ENCODE measurements at regions of chr4 and their contacts with region 1.

Region 1: GRCh38 chr4:186144142-186144955 is 39.8 kb downstream of the FAM149A start:
- DNase-seq: peak; percentile 42 to 92
- H3K4me3 ChIP-seq: peak overlapping the region; percentile 58 to 67 (median 58)
- H3K27ac ChIP-seq: peak overlapping the region; percentile 61 to 90 (median 83)
- H3K4me1 ChIP-seq: peaks cover 17 to 31% (median 24%) of the 10 kb centered on the region in 4 donors
- H3K27me3 ChIP-seq: no peaks in the 10 kb centered on the region
- CTCF ChIP-seq: peak in 1 of 7 experiments; percentile 6
- EP300 ChIP-seq: no peak
- POLR2A ChIP-seq: no peak

Region 2: GRCh38 chr4:186067757-186068385 is 76.5 kb before region 1 on chr4:
- intact Hi-C with region 1: loop called (anchors 5 kb)
- DNase-seq: peak; percentile 79 to 89
- H3K4me3 ChIP-seq: peak overlapping the region; percentile 50 to 54 (median 52)
- H3K27ac ChIP-seq: peak overlapping the region in 4 of 5 donors; percentile 59 to 79 (median 76)
- H3K4me1 ChIP-seq: peaks cover 0 to 24% (median 13%) of the 10 kb centered on the region in 4 donors
- H3K27me3 ChIP-seq: no peaks in the 10 kb centered on the region
- CTCF ChIP-seq: peak in 5 of 7 experiments; percentile 17 to 76 (median 50)
- EP300 ChIP-seq: no peak
- POLR2A ChIP-seq: no peak